GM12878 (cell line): ENCODE measurements at regions of chr3 and their contacts with region 1.

Region 1: GRCh38 chr3:197298341-197298857 is at the start of gene DLG1:
- DNase-seq: peak; percentile 53
- ATAC-seq: peak; percentile 84
- H3K4me3 ChIP-seq: peak within 1 kb of the TSS; percentile 97
- H3K27ac ChIP-seq: peak within 1 kb of the TSS; percentile 87
- H3K4me1 ChIP-seq: no peaks in the 10 kb centered on the region; the same call in 1 of the 2 replicates
- H3K27me3 ChIP-seq: no peaks in the 10 kb centered on the region; a peak in 3 of 4 replicates
- CTCF ChIP-seq: no peak
- EP300 ChIP-seq: no peak
- POLR2A ChIP-seq: peak; percentile 85
- RAD21 ChIP-seq: no peak
- polyA plus RNA-seq, gene DLG1: 9.2 to 10.0 TPM

Region 2: DNA sequence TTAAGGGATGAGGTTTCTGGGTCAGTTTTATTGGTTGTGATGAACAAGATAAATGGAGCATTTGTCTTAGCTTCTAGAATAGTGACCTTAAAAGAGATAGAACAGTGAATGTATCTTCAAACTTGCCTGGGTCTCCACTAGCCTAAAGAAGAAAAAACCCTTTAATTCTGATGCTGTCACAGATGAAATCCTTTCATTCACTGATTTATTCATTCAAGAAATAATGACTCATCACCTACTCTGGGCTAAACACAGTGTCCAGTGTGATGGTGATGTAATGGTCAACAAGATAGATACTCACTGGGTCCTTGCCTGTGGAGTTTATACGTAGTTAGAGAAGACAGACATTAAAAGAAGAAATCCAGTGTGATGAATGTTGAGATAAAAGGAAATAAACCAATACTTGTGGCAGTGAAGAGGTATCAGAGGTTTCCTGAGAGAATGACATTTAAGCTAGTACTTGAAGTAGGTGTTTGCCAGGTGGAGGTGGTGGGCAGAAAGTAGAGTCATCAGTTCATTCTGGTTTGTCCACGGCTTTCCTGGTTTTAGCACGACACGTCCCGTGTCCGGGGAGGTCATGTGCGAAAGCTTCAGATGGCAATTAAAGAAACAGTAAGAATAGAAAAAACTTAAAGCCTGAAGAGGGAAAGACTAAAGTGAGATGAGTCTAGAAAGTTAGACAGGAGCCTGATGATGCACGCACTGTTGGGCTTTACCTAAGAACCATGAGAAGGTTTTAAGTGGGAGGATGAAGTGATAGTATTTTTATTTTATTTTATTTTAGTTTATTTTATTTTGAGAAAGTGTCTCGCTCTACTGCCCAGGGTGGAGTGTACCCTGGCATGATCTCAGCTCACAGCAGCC is 540.3 kb before region 1 on chr3:
- CTCF ChIA-PET with region 1: no interaction called
- POLR2A ChIA-PET with region 1: no interaction called
- RAD21 ChIA-PET with region 1: no interaction called
- SMC1A ChIA-PET with region 1: no interaction called
- in situ Hi-C with region 1: no loop called
- intact Hi-C with region 1: no loop called
- DNase-seq: no peak
- ATAC-seq: peak; percentile 63
- H3K4me3 ChIP-seq: no peak overlapping the region
- H3K27ac ChIP-seq: no peak overlapping the region
- H3K4me1 ChIP-seq: no peaks in the 10 kb centered on the region
- H3K27me3 ChIP-seq: no peaks in the 10 kb centered on the region
- CTCF ChIP-seq: no peak
- EP300 ChIP-seq: no peak
- POLR2A ChIP-seq: no peak
- RAD21 ChIP-seq: no peak

Region 3: GRCh38 chr3:197088370-197088769 is 210.0 kb before region 1 on chr3:
- CTCF ChIA-PET with region 1: no interaction called
- POLR2A ChIA-PET with region 1: no interaction called
- RAD21 ChIA-PET with region 1: no interaction called
- SMC1A ChIA-PET with region 1: no interaction called
- in situ Hi-C with region 1: no loop called
- intact Hi-C with region 1: no loop called
- DNase-seq: no peak
- ATAC-seq: no peak
- H3K4me3 ChIP-seq: no peak overlapping the region
- H3K27ac ChIP-seq: no peak overlapping the region
- H3K4me1 ChIP-seq: no peaks in the 10 kb centered on the region
- H3K27me3 ChIP-seq: no peaks in the 10 kb centered on the region
- CTCF ChIP-seq: no peak
- EP300 ChIP-seq: no peak
- POLR2A ChIP-seq: no peak
- RAD21 ChIP-seq: no peak

Region 4: DNA sequence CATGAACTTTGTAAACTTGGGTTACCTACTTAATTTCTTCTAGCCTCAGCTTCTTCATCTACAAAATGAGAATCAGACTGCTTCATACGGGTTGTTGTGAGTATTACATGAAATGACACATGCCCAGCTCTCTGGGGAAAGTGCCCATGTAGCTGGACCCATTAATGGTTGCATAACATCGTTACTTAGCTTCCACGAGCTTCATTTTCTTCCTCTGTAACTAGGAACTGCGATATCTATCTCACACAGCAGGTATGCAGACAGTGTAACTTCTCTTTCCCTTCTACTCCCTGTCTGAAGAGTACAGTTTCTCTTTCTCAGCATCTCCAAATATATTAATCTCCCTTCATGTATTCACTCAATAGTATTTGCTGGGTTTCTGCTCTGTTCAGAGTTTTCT is 37.9 kb after region 1 on chr3:
- CTCF ChIA-PET with region 1: no interaction called
- POLR2A ChIA-PET with region 1: no interaction called
- RAD21 ChIA-PET with region 1: no interaction called
- SMC1A ChIA-PET with region 1: no interaction called
- in situ Hi-C with region 1: no loop called
- intact Hi-C with region 1: no loop called
- DNase-seq: no peak
- ATAC-seq: no peak
- H3K4me3 ChIP-seq: no peak overlapping the region
- H3K27ac ChIP-seq: no peak overlapping the region
- H3K4me1 ChIP-seq: peaks cover 6% of the 10 kb centered on the region
- H3K27me3 ChIP-seq: no peaks in the 10 kb centered on the region
- CTCF ChIP-seq: no peak
- EP300 ChIP-seq: no peak
- POLR2A ChIP-seq: no peak
- RAD21 ChIP-seq: no peak

Region 5: DNA sequence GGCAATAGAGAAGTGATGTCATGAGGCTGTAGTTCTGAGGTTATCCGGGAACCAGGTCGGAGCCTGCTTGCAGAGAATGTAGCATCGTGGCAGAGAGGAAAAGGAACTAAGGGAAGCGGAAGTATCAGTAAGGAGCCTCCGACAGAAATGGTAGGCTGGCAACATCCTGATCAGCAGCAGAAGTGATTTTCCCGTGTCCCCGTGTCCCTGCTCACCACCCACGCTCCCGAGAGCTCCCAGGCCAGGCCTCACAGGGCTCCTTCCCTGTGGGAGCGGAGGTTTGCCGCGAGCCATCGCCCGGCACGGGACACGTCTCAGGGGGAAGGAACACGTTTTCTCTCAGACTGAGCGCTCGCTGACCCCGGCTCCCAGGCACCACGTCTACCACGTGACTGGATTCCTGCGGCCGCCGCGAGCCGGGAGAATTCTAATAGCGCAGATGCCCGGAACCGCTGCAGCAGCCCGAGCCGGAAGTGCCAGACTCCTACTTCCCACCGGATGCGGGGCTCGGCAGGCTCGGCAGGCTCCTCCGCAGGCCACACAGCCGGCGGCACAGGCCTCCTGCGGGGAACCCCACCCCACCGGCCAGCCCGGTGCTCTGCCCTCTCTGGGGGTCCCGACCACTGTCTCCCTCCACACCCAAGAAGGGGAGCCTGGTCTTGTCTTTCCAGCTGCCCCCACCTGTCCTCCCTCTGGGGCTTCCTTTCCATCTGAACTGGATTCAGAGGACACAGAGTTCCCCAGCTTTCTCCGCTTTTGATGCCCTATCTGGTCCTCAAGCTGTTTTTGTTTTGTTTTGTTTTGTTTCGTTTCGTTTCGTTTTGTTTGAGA is 158.1 kb after region 1 on chr3:
- CTCF ChIA-PET with region 1: interaction called, 4 read pairs
- POLR2A ChIA-PET with region 1: no interaction called
- RAD21 ChIA-PET with region 1: interaction called, 6 read pairs
- SMC1A ChIA-PET with region 1: interaction called, 3 read pairs
- in situ Hi-C with region 1: no loop called
- intact Hi-C with region 1: loop called (anchors 10 kb)
- DNase-seq: no peak
- ATAC-seq: peak; percentile 85
- H3K4me3 ChIP-seq: peak overlapping the region; percentile 82
- H3K27ac ChIP-seq: peak overlapping the region; percentile 58
- H3K4me1 ChIP-seq: no peaks in the 10 kb centered on the region
- H3K27me3 ChIP-seq: no peaks in the 10 kb centered on the region
- CTCF ChIP-seq: no peak
- EP300 ChIP-seq: no peak
- POLR2A ChIP-seq: peak; percentile 79
- RAD21 ChIP-seq: no peak

Region 6: DNA sequence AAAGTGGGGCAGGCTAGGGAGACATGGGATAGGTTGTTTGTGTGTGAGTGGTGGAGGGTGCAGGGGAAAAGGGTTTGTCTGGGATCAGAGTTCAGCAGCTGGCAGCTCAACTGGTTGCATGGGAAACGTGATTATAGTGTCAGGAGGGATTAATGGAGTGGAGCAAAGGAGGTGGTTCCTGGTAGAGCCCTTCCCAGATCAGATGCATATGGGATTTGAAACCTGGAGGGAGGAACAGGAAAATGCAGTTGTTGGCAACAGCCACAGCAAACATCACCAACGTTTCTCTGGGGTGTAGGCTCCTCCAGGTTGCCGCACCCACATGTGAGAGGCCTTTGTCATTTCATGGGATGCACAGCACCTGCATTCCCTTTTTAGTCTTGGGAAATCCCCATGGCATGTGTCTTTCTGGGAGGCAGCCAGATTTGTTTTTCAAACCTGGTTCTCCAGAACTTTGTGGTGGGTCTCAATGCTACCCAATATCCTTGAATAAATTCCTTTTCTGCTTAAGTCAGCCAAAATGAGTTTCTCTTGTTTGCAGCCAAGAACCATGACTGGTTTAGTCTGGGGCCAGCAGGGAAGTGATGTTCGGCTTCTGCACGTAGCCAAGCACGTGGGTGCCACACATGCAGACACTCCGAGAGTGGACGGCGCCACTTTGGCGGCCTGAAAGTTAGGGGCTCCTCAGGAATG is 196.1 kb after region 1 on chr3:
- CTCF ChIA-PET with region 1: no interaction called
- POLR2A ChIA-PET with region 1: no interaction called
- RAD21 ChIA-PET with region 1: no interaction called
- SMC1A ChIA-PET with region 1: no interaction called
- in situ Hi-C with region 1: no loop called
- intact Hi-C with region 1: loop called (anchors 5 kb)
- DNase-seq: no peak
- ATAC-seq: no peak
- H3K4me3 ChIP-seq: no peak overlapping the region
- H3K27ac ChIP-seq: peak overlapping the region; percentile 49
- H3K4me1 ChIP-seq: peaks cover 30% of the 10 kb centered on the region
- H3K27me3 ChIP-seq: no peaks in the 10 kb centered on the region; a peak in 1 of 4 replicates
- CTCF ChIP-seq: no peak
- EP300 ChIP-seq: no peak
- POLR2A ChIP-seq: no peak
- RAD21 ChIP-seq: no peak